GM18951 (cell line): ENCODE measurements at regions of chr19 and their contacts with region 1.

Region 1: GRCh38 chr19:14413693-14414181 is 5.4 kb downstream of the DDX39A start:
- POLR2A ChIP-seq: peak; percentile 8

Region 2: DNA sequence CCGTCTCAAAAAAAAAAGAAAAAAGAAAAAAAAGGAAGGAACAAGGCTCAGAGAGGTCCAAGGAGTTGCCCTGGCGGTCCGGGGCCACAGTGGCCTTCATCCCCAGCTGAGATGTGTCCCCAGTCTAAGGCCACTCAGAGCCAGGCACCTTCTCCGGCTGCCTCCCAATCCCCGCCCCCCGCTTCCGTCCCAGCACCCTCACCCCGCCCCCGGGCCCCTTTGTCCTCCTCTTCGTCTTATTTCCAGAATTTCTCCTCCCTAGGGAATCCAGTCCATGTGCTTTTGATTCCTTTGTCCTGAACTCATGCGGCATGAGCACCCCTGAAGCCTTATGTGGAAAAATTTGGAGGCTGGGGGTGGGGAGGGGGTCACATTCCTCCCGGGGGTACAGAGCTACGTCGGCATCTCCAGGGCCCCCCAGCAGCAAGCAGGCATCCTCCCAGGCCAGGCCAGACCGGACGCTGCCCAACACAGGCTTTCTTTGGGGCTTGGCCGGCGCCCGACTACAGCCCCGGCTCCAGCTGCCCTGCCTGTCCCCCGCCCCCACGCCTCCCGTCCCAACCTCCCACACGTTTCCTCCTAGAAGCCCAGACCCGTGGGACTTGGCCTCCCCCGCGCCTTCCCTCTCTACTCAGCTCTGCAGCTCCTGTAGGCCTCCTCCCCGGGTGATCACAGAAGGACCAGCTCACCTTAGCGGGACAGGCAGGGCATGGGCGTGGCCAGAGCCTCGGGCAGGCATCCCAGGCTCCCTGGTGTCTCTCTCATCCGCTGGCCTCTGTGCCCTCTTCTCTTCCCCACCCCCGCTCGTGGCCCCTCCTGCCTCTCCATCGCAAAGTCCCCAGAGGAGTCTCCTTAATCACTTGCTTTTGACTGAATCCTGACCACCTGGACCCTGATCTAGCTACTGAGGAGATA is 50.3 kb before region 1 on chr19:
- in situ Hi-C with region 1: loop called (anchors 5 kb)
- POLR2A ChIP-seq: peak; percentile 44

Region 3: DNA sequence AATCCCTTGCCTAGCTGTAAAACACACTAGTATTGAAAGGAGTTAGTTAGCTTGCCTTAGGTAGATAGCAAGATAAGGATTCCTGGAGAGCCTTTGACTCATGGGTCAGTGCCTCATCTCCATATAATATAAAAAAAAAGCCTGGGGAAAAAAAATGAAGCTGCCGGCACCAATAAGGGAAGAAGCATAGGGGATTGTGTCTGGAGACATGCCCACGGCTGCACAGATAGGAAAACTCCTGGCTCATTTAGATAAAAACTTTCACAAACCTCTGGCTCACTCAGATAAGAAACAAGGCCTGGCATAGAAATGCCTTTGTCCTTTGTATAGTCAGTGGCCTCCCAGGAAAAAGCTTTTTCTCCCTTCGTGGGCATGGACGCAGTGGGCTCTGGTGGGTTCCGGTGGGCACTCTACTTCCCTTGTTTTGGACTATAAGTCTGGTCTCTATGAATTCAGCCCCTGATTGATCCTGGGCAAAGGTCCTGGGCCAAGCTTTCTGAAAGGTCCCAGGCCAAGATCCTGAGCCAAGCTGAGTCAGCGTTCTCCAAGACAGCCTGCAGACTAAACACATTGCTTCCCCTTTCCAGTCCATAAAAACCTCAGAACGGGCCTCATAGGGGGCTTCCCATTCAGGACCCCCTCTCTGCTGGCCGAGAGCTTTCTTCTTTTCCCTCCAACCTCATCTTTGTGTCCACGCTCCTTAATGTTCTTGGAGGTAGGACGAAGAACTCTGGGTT is 477.1 kb after region 1 on chr19:
- in situ Hi-C with region 1: no loop called
- POLR2A ChIP-seq: no peak